GM12878 (cell line): ENCODE measurements at regions of chr12 and their contacts with region 1.

Region 1: GRCh38 chr12:15712823-15713660 is 76.1 kb downstream of the EPS8 start:
- DNase-seq: no peak
- ATAC-seq: peak; percentile 33
- H3K4me3 ChIP-seq: no peak overlapping the region
- H3K27ac ChIP-seq: no peak overlapping the region
- H3K4me1 ChIP-seq: no peaks in the 10 kb centered on the region
- H3K27me3 ChIP-seq: no peaks in the 10 kb centered on the region
- CTCF ChIP-seq: no peak
- EP300 ChIP-seq: no peak
- POLR2A ChIP-seq: no peak
- RAD21 ChIP-seq: no peak

Region 2: DNA sequence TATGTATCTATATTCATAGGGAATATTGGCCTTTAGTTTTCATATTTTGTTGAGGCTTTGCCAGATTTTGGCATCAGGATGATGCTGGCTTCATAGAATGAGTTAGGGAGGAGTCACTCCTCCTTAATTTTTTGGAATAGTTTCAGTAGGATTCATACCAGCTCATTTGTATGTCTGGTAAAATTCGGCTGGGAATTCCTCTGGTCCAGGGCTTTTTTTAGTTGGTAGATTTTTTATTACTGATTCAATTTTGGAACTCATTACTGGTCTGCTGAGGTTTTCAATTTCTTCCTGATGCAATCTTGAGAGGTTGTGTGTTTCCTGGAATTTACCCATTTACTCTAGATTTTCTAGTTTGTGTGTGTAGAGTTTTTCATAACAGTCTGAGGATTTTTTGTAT is 99.1 kb before region 1 on chr12:
- CTCF ChIA-PET with region 1: no interaction called
- POLR2A ChIA-PET with region 1: no interaction called
- RAD21 ChIA-PET with region 1: no interaction called
- SMC1A ChIA-PET with region 1: no interaction called
- in situ Hi-C with region 1: no loop called
- intact Hi-C with region 1: no loop called
- DNase-seq: no peak
- ATAC-seq: no peak
- H3K4me3 ChIP-seq: no peak overlapping the region
- H3K27ac ChIP-seq: no peak overlapping the region
- H3K4me1 ChIP-seq: no peaks in the 10 kb centered on the region
- H3K27me3 ChIP-seq: no peaks in the 10 kb centered on the region
- CTCF ChIP-seq: no peak
- EP300 ChIP-seq: no peak
- POLR2A ChIP-seq: no peak
- RAD21 ChIP-seq: no peak

Region 3: GRCh38 chr12:15688202-15688736 is 24.8 kb before region 1 on chr12:
- CTCF ChIA-PET with region 1: interaction called, 3 read pairs
- POLR2A ChIA-PET with region 1: interaction called, 3 read pairs
- RAD21 ChIA-PET with region 1: interaction called, 3 read pairs
- SMC1A ChIA-PET with region 1: interaction called, 89 read pairs
- in situ Hi-C with region 1: no loop called
- intact Hi-C with region 1: no loop called
- DNase-seq: no peak
- ATAC-seq: peak; percentile 85
- H3K4me3 ChIP-seq: no peak overlapping the region
- H3K27ac ChIP-seq: no peak overlapping the region
- H3K4me1 ChIP-seq: 0 out of 2 replicates have a peak, but pooled peaks cover 7% of the 10 kb centered on the region
- H3K27me3 ChIP-seq: no peaks in the 10 kb centered on the region
- CTCF ChIP-seq: no peak
- EP300 ChIP-seq: no peak
- POLR2A ChIP-seq: no peak
- RAD21 ChIP-seq: no peak

Region 4: DNA sequence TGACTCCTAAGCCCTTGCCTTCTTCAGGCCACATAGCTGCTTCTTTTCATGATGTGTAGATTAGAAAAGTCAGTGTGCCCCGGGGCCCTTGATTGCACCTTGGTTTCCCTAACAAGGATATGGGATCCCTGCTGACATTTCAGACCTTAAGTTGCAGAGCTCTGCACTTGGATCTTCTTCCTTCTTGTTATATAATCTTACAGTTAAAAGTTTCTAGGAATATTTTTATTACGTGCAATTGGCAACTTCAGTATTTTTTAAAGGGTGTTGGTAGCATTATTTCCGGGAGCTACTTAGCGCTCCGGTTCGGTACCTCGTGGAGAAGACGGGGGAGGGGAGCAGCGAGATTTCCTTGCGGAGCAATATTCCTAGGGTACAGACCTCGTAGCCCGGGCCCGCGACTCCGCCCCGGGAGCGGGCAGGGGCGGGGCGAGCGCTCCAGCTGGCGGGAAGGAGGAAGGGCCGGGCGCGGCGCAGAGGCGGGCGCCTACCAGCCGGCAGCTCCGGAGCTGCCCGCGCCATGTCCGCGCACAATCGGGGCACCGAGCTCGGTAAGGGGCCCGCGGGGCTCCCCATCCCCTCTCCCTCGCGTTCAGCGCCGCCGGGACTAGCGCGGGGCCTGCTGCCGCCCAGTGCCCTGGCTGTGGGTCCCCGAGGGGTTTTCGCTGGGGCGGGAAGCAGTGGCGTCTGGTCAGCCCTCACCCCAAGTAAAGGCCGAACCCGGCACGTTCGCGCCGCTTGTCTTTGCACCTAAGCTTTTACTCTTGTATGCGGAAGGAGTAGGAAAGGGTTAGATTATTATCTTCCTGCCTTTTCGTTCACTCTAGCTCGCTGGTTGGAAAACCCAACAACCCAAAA is 198.1 kb after region 1 on chr12 and contains the start of gene DERA:
- CTCF ChIA-PET with region 1: no interaction called
- POLR2A ChIA-PET with region 1: no interaction called
- RAD21 ChIA-PET with region 1: no interaction called
- SMC1A ChIA-PET with region 1: no interaction called
- in situ Hi-C with region 1: no loop called
- intact Hi-C with region 1: no loop called
- DNase-seq: no peak
- ATAC-seq: peak; percentile 94
- H3K4me3 ChIP-seq: peak within 1 kb of the TSS; percentile 73
- H3K27ac ChIP-seq: peak within 1 kb of the TSS; percentile 88
- H3K4me1 ChIP-seq: no peaks in the 10 kb centered on the region
- H3K27me3 ChIP-seq: no peaks in the 10 kb centered on the region
- CTCF ChIP-seq: no peak
- EP300 ChIP-seq: no peak
- POLR2A ChIP-seq: peak; percentile 88
- RAD21 ChIP-seq: no peak
- polyA plus RNA-seq, gene DERA: 64.2 to 97.1 TPM

Region 5: DNA sequence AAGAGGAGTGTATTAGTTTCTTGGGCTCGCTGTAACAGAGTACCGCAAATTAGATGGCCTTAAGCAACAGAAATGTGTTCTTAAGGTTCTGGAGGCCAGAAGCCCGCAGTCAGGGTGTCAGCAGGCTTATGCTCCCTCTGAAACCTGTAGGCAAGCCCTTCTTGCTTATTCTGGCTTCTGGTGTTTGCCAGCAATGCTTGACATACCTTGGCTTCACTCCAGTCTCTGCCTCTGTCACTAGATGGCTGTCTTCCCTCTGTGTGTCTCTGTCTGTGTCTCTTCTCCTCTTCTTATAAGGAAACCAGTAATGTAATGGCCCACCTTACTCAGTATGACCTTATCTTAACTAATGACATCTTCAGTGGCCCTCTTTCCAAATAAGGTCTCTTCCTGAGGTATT is 283.2 kb after region 1 on chr12:
- CTCF ChIA-PET with region 1: no interaction called
- POLR2A ChIA-PET with region 1: no interaction called
- RAD21 ChIA-PET with region 1: no interaction called
- SMC1A ChIA-PET with region 1: no interaction called
- in situ Hi-C with region 1: no loop called
- intact Hi-C with region 1: no loop called
- DNase-seq: no peak
- ATAC-seq: peak; percentile 30; the same call in 2 of the 3 replicates
- H3K4me3 ChIP-seq: no peak overlapping the region
- H3K27ac ChIP-seq: no peak overlapping the region
- H3K4me1 ChIP-seq: no peaks in the 10 kb centered on the region
- H3K27me3 ChIP-seq: no peaks in the 10 kb centered on the region
- CTCF ChIP-seq: 0 out of 6 replicates have a peak, but pooled peaks of 1 of the 3 experiments have one; percentile 8
- EP300 ChIP-seq: no peak
- POLR2A ChIP-seq: no peak
- RAD21 ChIP-seq: no peak; the same call in 1 of the 2 replicates

Region 6: DNA sequence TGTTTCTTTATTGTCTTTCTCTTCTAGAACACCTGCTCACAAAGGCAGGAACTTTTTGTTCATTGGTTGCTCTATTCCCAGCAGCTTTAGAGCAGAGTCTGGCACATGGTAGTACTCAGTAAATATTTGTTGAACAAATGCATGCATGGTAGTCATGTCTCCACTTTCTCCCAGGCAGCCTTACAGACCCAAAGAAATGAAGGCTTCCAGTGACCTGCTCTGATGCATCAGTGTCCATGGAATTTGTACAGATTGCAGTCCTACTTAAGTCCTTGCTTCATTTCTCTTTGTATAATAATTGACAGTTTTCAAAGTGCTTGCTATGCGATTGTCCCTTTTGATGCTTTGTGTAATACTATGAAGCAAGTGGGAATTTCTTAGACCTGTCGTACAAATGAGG is 317.7 kb after region 1 on chr12:
- CTCF ChIA-PET with region 1: no interaction called
- POLR2A ChIA-PET with region 1: no interaction called
- RAD21 ChIA-PET with region 1: no interaction called
- SMC1A ChIA-PET with region 1: no interaction called
- in situ Hi-C with region 1: no loop called
- intact Hi-C with region 1: no loop called
- DNase-seq: no peak
- ATAC-seq: no peak
- H3K4me3 ChIP-seq: no peak overlapping the region
- H3K27ac ChIP-seq: no peak overlapping the region
- H3K4me1 ChIP-seq: no peaks in the 10 kb centered on the region
- H3K27me3 ChIP-seq: no peaks in the 10 kb centered on the region
- CTCF ChIP-seq: no peak
- EP300 ChIP-seq: no peak
- POLR2A ChIP-seq: no peak
- RAD21 ChIP-seq: no peak